ENCODE measurements at regions of chr5 and their contacts with region 1.

Region 1: GRCh38 chr5:149035372-149035790 is 27.5 kb downstream of the SH3TC2 start:
- DNase-seq: peak; percentile 87
- ATAC-seq: peak; percentile 93

Region 2: DNA sequence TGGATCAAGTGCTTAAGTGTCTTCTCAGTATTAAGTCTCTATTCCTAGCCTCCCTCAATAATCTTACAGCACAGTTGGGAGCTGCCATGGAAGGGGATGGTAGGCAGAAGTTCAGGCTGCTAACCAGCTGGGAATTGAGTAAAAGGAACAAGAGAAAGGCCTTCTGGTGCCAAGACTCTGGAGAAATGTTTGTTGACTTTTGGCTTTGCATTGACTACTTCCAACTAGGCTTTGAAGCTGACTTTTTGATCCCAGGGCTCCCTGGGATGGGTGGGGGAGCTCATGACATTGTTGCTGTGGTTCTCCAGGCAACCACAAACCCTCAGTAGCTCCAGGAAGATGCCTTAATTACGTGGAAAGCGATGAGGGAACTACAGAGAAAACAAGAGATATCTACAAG is 295.9 kb before region 1 on chr5:
- intact Hi-C with region 1: loop called (anchors 5 kb)
- DNase-seq: no peak
- ATAC-seq: peak; percentile 28

Region 3: DNA sequence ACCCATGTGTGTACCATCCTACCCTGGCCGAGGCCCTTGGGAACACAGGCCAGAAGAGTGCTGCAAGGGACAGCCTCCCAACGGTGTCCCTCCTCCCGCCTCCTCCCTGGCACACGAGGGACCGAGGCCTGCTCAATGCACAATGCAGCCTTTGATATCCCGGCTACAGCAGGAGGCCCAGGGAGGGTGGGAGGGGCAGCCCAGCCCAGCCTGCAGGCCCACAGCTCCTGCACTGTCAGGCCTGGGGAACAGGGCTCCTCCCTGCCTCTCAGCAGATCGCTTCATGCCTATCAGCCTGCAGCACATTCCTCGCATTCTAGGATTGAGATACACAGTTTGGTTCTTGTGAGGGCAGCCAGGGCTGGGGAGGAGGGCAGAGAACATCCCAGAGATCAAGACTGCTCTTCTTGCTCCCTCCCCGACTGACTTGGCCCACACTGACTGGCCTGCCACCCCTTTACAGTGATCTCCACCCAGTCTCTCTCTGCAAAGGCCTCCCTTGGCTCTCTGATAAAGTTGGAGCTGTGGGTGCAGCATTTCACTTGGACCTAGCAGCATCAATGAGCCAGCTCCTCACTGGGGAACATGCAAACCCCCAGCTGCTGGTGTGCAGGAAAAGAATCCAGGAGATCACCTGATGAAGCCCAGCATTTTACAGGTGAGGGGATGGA is 27.8 kb after region 1 on chr5 and contains the start of gene SH3TC2:
- intact Hi-C with region 1: no loop called
- DNase-seq: peak; percentile 72
- ATAC-seq: peak; percentile 89
- total RNA-seq, gene SH3TC2: 59.1 TPM

Region 4: GRCh38 chr5:149114403-149115312 is 79.3 kb after region 1 on chr5:
- intact Hi-C with region 1: loop called (anchors 10 kb)
- DNase-seq: peak; percentile 69
- ATAC-seq: peak; percentile 96

Region 5: DNA sequence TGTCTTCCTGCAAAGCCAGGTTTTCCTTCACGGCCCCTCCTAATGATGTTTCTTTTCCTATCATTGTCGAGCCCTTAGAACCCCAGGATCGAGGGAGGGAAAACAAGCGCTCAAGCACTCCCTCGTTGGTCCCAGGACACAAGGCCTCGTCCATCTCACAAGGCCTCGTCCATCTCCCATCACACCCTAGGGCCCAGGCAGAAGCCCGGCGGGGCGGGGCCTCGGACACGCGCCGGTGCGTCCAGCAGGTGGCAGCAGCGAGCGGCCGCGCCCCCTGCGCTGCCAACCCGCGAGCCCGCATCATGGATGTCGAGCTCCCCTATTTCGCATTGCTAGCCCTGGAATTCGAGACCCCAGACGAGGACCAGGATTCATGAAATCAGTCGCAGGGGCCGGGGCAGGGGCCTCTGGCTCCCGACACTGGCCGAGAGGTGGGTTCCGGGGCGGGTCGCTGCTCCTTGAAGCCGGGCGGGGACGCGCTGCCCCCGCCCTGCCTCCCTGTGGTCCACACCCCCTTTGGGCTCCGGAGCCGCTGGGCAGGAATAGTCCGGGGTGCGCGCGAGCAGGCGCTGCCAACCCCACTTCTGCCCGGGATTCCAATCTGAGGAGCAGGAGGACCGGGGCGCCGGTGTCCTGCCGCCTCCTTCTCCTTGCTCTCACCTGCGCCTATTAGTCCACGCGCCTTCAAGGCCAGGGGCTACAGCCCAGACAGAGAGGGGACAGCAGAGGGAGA is 106.0 kb after region 1 on chr5 and contains the start of gene ABLIM3:
- intact Hi-C with region 1: no loop called
- DNase-seq: peak; percentile 81
- ATAC-seq: peak; percentile 89
- total RNA-seq, gene ABLIM3: 67.6 TPM